Caco-2 (cell line): ENCODE measurements at regions of chr10 and their contacts with region 1.

Region 1: GRCh38 chr10:48551861-48552591 is 52.8 kb downstream of the ARHGAP22 start:
- DNase-seq: peak in 1 of 2 experiments; percentile 58
- H3K4me3 ChIP-seq: no peak overlapping the region
- H3K4me3 Mint-ChIP-seq: no peak overlapping the region
- H3K27ac Mint-ChIP-seq: no peak overlapping the region
- H3K4me1 ChIP-seq: no peaks in the 10 kb centered on the region
- H3K4me1 Mint-ChIP-seq: no peaks in the 10 kb centered on the region
- H3K27me3 ChIP-seq: no peaks in the 10 kb centered on the region
- H3K27me3 Mint-ChIP-seq: no peaks in the 10 kb centered on the region
- CTCF ChIP-seq: peak; percentile 84 to 86

Region 2: GRCh38 chr10:48608279-48608681 is 56.3 kb after region 1 on chr10:
- CTCF ChIA-PET with region 1: interaction called, 3 read pairs
- POLR2A ChIA-PET with region 1: no interaction called
- intact Hi-C with region 1: loop called (anchors 5 kb)
- DNase-seq: peak; percentile 66 to 73
- H3K4me3 ChIP-seq: no peak overlapping the region
- H3K4me3 Mint-ChIP-seq: no peak overlapping the region
- H3K27ac Mint-ChIP-seq: no peak overlapping the region
- H3K4me1 ChIP-seq: 0 out of 2 replicates have a peak, but pooled peaks cover 6% of the 10 kb centered on the region
- H3K4me1 Mint-ChIP-seq: peaks cover 6% of the 10 kb centered on the region
- H3K27me3 ChIP-seq: 0 out of 2 replicates have a peak, but pooled peaks cover 4% of the 10 kb centered on the region
- H3K27me3 Mint-ChIP-seq: peaks cover 17% of the 10 kb centered on the region
- CTCF ChIP-seq: peak; percentile 80 to 93